Left ventricle myocardium inferior (tissue), 1 donor: ENCODE measurements at regions of chr11 and their contacts with region 1.

Region 1: GRCh38 chr11:83156150-83156995 is 558 bp upstream of the PCF11 start:
- DNase-seq: no peak
- H3K4me3 ChIP-seq: peak overlapping the region; percentile 91
- H3K27ac ChIP-seq: peak overlapping the region; percentile 99
- H3K4me1 ChIP-seq: peaks cover 52% of the 10 kb centered on the region
- H3K27me3 ChIP-seq: no peaks in the 10 kb centered on the region
- CTCF ChIP-seq: no peak

Region 2: DNA sequence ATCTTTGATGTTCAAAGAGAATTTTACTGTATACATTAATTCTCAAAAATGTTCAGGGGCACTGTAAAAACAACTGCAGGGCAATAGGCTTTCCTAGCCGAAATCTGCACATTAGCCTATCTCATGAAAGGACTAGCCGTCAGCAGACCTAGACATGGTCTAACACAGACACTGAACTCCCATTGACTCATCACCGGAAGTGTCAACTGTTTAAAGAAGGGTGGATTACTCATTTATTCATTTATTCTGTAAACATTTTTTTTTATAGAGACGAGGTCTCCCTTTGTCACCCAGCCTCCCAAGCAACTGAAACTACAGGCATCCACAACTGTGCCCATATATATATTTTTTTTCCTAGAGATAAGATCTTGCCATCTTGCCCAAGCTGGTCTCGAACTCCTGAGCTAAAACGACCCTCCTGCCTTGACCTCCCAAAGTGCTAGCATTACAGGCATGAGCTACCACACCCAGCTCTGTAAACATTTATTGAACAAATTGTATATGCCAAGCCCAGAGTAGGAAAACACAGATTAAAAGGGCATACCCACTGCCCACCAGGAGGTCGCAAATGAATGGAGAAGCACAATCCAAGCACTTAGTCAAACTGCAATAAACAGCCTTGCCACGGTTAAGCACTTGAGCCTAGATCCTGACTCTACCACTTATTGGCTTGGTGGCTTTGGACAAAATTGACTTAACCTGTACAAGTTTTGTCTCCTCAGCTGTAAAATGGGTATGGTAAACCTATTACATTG is 111.2 kb before region 1 on chr11:
- intact Hi-C with region 1: no loop called
- DNase-seq: no peak
- H3K4me3 ChIP-seq: no peak overlapping the region
- H3K27ac ChIP-seq: peak overlapping the region; percentile 10
- H3K4me1 ChIP-seq: peaks cover 63% of the 10 kb centered on the region
- H3K27me3 ChIP-seq: no peaks in the 10 kb centered on the region
- CTCF ChIP-seq: no peak

Region 3: GRCh38 chr11:83071567-83072349 is 84.6 kb before region 1 on chr11 and contains the start of gene RAB30:
- intact Hi-C with region 1: loop called (anchors 5 kb)
- DNase-seq: peak; percentile 92
- H3K4me3 ChIP-seq: peak within 1 kb of the TSS; percentile 81
- H3K27ac ChIP-seq: peak within 1 kb of the TSS; percentile 95
- H3K4me1 ChIP-seq: peaks cover 82% of the 10 kb centered on the region
- H3K27me3 ChIP-seq: no peaks in the 10 kb centered on the region
- CTCF ChIP-seq: no peak
- total RNA-seq, gene RAB30: 24.7 TPM